ENCODE measurements at regions of chr14 and their contacts with region 1.

Region 1: DNA sequence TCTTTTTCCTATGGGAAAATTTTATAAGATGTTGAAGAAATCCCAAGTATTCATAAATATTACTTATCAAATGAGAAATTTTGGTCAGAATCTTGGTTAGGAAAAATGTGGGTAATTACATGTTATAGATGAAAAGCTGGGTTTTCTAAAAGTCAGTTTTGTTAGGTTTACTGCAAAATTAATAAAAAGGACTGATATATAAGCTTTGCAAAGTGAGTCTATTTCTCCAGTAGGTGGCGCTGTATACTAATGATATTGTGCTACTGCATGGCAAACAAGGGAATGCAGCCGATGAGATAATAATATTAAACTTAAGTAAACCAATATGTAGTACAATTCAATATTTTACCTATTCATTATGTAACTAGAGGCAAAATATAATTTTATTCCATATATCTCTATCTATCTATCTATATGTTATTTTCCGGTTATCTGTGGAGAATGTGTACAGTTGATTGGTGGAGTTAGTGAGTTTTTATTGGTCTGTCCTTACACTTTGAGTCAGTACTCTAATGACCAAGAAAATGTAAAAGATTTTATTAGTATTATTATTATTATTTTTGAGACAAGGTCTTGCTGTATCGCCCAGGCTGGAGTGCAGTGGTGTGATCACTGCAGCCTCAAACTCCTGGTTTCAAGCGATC is 32.9 kb downstream of the MIPOL1 start:
- DNase-seq: peak; percentile 31
- H3K4me3 ChIP-seq: no peak overlapping the region
- H3K27ac ChIP-seq: no peak overlapping the region
- H3K4me1 ChIP-seq: no peaks in the 10 kb centered on the region
- H3K27me3 ChIP-seq: no peaks in the 10 kb centered on the region
- CTCF ChIP-seq: peak; percentile 70 to 75

Region 2: DNA sequence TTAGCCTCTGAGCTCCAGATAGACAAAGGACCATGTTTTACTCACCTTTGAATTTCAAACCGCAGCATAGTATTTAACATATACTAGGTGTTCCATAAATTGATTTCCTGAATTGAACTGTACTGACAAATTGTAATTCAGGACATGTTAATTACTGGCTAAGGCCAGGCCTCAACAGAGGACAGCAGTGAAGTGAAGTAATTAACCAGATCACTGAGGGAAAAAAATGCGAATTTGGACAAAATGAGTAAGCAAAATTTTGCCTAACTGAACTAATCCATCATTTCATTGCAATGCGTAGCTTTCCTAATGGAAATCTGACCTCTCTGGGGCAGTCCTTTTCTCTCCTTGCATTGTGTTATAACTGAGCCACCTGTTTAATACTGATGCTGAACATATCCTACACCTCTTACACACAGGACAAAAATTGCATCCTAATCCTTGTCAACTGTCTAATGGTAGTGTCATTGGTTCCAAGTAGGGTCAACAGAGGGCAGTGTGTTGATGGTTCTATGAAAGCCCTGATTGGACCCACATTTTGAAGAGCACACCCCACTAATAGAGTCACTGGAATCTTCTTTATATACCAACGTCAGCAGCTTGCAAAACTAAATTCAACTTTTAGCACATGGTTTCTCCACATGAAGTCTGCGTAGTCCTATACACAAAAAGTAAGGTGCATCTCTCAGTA is 206.7 kb before region 1 on chr14:
- CTCF ChIA-PET with region 1: no interaction called
- dilution Hi-C with region 1: no loop called
- in situ Hi-C with region 1: no loop called
- intact Hi-C with region 1: loop called (anchors 10 kb)
- DNase-seq: no peak
- H3K4me3 ChIP-seq: no peak overlapping the region
- H3K27ac ChIP-seq: no peak overlapping the region
- H3K4me1 ChIP-seq: no peaks in the 10 kb centered on the region
- H3K27me3 ChIP-seq: no peaks in the 10 kb centered on the region
- CTCF ChIP-seq: peak; percentile 18 to 41

Region 3: DNA sequence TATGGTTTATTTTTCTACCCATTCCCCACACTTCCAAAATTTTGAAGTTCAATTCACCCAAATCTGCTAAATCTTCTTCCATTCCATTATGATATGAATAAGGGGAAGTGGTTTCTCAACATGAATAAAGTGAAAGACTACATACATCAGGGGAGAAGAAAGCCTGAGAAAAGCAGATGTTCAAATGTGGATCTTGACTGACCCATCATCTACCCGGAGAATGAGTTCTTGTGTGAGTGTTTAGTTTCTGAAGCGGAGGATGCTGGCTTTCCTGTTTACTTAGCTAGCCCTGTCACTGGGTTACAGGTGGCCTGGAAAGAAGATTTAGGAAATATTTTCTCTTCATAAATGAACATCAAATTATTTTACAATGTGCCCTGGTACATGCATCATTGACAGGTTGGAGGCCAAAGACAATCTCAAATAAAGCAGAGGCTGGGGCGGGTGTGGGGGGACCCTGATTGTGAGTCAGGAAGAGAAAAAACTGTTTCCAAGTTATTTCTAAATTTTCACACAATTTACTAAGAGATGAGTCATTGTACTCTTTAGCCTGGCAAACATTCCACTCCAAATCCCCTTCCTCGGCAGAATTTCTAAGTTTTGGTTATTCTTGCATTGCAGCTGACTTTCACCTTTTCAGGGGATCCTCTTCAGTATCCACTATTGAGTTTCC is 193.9 kb before region 1 on chr14:
- CTCF ChIA-PET with region 1: no interaction called
- dilution Hi-C with region 1: no loop called
- in situ Hi-C with region 1: no loop called
- intact Hi-C with region 1: no loop called
- DNase-seq: no peak
- H3K4me3 ChIP-seq: no peak overlapping the region
- H3K27ac ChIP-seq: no peak overlapping the region
- H3K4me1 ChIP-seq: no peaks in the 10 kb centered on the region
- H3K27me3 ChIP-seq: no peaks in the 10 kb centered on the region
- CTCF ChIP-seq: no peak

Region 4: GRCh38 chr14:37150414-37150813 is 80.3 kb before region 1 on chr14:
- CTCF ChIA-PET with region 1: interaction called, 7 read pairs
- dilution Hi-C with region 1: no loop called
- in situ Hi-C with region 1: no loop called
- intact Hi-C with region 1: loop called (anchors 2 kb)
- DNase-seq: peak; percentile 36
- H3K4me3 ChIP-seq: no peak overlapping the region
- H3K27ac ChIP-seq: no peak overlapping the region
- H3K4me1 ChIP-seq: peaks cover 2% of the 10 kb centered on the region
- H3K27me3 ChIP-seq: no peaks in the 10 kb centered on the region
- CTCF ChIP-seq: peak; percentile 65 to 68

Region 5: GRCh38 chr14:37251778-37252177 is 21.1 kb after region 1 on chr14:
- CTCF ChIA-PET with region 1: no interaction called
- dilution Hi-C with region 1: no loop called
- in situ Hi-C with region 1: no loop called
- intact Hi-C with region 1: no loop called
- DNase-seq: no peak
- H3K4me3 ChIP-seq: no peak overlapping the region
- H3K27ac ChIP-seq: no peak overlapping the region
- H3K4me1 ChIP-seq: no peaks in the 10 kb centered on the region
- H3K27me3 ChIP-seq: no peaks in the 10 kb centered on the region
- CTCF ChIP-seq: peak in 1 of 2 donors; percentile 25

Region 6: DNA sequence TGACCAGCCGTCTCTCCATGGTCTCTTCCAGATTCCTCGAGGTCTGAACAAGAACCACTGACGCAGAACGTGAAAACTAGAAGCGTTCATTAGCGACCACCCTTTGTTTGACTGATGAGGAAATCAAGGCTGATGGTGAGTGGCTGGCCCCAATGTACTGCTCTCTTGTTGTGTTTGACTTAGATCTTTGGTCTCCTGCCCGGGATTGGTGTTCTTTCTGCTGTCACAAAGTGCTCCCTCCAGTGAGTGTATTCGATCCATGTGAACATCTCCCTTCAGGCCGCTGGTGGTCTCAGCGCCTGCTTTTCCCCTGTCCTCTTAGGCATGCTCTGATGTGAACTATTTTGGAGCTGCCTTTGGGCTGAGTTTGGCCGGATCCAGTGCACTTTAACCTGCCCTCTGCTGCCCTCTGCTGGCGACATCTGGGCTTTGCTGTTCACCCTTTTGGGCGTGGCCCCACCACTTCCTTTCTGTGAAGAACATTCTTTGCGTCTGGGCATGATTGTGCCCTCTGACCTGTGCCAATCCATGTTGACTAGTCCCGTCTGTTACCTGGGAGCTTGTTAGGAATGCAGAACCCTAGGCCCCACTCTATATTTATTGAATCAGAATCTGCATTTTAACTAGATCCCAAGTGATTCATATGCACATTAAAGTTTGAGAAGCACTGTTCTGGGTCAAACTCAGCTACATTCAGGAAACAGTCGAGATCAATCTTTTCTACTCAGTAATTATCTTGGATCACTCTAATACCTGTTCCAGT is 643.9 kb after region 1 on chr14:
- CTCF ChIA-PET with region 1: no interaction called
- dilution Hi-C with region 1: no loop called
- in situ Hi-C with region 1: no loop called
- intact Hi-C with region 1: loop called (anchors 1 kb)
- DNase-seq: peak; percentile 66
- H3K4me3 ChIP-seq: no peak overlapping the region
- H3K27ac ChIP-seq: peak overlapping the region; percentile 14
- H3K4me1 ChIP-seq: peaks cover 4% of the 10 kb centered on the region
- H3K27me3 ChIP-seq: no peaks in the 10 kb centered on the region
- CTCF ChIP-seq: peak; percentile 86 to 89

Measured in mammary epithelial cell (primary cell).